GM10248 (cell line): ENCODE measurements at regions of chr1 and their contacts with region 1.

Region 1: DNA sequence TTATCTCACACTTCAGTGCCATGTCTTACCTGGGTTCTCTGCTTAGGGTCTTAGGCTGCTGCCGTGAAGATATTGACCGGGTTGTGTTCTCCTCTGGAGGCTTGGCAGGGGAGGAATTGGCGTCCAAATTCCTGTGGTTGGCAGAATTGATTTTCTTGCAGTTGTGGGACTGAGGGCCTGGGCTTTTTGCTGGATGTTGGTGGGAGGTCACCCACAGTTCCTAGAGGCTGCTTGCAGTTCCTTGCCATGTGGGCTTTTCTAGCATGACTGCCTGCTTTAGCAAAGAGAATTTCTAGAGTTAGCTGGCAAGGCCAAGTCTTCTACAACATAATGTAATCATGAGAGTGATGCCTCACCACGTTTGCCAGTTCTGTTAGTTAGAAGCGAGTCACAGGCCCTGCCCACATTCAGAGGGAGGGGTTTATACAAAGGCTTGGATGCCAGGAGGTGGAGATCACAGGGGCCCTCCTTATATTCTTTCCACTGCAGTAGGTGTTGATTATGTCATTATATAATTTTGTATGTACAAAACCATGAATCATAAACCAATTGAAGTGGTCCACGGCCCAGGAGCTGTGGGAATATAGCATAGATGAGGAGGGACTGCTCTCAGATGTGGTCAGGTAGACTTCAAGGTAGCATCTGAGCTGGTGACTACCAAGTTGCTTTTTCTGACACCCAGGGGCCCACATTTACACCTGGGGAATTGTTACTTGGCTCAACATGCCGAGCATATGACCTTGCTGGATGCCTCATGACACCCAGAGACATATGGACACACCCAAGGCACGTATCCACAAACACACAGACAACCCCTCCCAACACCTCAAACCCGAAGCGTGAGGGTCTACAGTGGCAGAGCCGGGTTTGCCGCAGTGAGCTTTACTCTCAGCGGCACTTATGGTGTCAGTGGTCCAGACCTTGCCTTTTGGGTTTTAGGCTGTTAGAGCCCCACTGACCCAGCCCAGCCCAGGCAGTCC is 6.7 kb downstream of the UBL4B start:
- DNase-seq: no peak
- CTCF ChIP-seq: no peak

Region 2: GRCh38 chr1:110053557-110054428 is 65.1 kb before region 1 on chr1:
- CTCF ChIA-PET with region 1: interaction called, 25 read pairs
- POLR2A ChIA-PET with region 1: no interaction called
- DNase-seq: peak; percentile 80
- CTCF ChIP-seq: peak; percentile 90

Region 3: GRCh38 chr1:110060034-110060661 is 58.8 kb before region 1 on chr1:
- CTCF ChIA-PET with region 1: interaction called, 25 read pairs
- POLR2A ChIA-PET with region 1: no interaction called
- DNase-seq: peak; percentile 83
- CTCF ChIP-seq: peak; percentile 87

Region 4: DNA sequence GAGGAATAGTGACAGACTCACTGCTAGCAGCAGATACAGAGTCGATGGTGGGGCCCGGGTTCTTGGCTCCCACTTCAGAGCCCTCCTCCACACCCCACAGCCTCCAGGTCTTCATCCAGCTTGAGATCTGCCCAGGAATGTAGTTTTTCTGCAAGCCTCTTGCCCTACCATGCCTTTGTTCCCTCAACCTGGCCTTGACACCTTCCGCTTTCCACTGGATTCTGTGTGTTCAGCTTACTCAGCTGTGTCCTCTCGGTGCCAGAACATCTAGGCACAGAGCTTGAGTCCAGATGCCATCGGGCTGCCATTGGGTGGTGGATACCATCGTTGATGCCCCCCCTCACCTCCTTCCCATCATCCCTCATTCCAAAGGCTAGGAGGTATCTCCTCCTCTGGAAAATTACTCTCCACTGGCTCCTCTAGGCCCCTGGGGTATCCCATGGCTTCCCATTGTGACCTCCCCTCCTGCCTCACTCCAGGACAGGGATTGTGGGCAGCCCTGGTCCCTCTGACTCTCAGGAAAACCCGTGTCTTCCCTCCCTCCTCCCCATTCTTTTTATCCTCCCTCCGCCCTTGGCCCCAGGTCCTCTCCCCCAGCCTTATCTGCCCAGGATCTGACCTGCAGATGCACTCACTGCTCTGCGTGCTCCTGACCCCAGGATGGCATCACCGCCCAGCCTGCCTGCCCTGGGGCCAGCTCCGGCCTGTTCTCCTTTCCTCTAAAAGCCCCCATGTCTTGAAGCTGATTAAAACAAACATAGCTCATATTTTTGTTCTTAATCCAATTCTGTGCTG is 20.8 kb before region 1 on chr1:
- CTCF ChIA-PET with region 1: interaction called, 43 read pairs
- POLR2A ChIA-PET with region 1: no interaction called
- DNase-seq: no peak
- CTCF ChIP-seq: no peak

Region 5: DNA sequence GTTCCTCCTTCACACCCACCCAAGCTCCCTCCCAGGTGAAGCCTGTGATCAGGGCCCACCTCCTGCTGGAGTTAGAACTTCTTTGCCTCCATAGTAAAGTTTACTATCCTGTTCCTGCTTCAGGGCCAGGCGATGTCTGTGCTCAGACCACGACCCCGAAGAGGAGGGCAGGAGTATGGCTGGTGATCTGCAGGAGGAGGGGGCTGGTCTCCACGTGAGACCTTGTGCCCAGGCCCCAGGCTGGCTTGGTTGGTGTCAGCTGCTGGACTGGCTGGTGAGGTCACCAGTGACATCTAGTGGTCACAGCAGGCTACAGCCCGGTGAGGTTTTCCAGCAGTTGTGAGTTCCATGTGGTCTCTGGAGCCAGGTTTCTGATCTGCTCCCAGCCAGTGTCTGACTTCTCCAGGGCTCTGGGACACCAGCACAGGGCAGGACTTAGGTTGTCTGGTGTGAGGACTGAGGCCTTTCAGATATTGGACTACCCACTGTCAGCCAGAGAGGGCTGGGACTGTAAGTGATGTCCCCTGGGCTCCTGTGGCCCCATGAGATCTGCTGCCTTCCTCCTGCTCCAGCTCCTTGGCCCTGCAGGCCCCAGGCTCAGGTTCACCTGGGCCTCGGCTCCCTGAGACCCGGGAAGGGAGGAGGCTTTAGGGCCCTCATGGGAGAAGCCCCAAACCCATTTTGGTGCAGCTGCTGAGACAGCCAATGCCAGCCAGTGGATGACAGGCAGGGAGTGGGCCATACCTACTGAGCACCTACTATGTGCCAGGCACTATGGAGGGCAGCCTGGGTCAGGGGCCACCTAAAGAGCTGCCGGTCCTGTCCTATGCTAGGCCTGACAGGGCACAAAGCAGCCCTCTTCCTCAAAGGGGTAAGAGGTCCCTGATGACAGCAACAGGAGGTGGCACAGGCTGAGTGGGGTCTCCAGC is 12.6 kb before region 1 on chr1:
- CTCF ChIA-PET with region 1: interaction called, 43 read pairs
- POLR2A ChIA-PET with region 1: no interaction called
- DNase-seq: peak; percentile 85
- CTCF ChIP-seq: peak; percentile 96

Region 6: GRCh38 chr1:110188035-110188618 is 69.2 kb after region 1 on chr1:
- CTCF ChIA-PET with region 1: no interaction called
- POLR2A ChIA-PET with region 1: no interaction called
- DNase-seq: no peak
- CTCF ChIP-seq: no peak